OCI-LY7 (cell line): ENCODE measurements at regions of chr4 and their contacts with region 1.

Region 1: GRCh38 chr4:31442236-31442635 is 722.1 kb downstream of the PCDH7 start:
- DNase-seq: no peak
- H3K4me3 ChIP-seq: no peak overlapping the region
- H3K27ac ChIP-seq: no peak overlapping the region
- H3K4me1 ChIP-seq: no peaks in the 10 kb centered on the region
- CTCF ChIP-seq: 0 out of 2 replicates have a peak, but pooled peaks have one; percentile 26

Region 2: DNA sequence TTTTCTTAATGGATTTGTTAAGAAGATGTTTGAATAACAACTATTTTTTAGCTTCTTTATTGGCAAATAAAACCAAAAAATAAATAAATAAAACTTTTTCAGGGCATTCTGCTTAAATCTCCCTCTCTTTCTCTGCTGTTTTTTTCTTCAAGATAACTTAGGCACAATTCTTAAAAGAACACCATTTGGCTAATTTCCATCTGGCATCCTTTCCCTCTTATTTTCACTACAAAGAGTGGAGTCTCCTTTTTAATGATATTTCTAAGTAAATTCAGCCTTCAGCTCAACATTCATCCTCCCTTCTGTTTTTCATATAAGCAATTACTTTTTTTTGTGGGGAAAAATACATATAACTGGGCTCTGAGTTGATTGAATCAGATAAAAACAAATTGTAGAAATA is 634.0 kb before region 1 on chr4:
- CTCF ChIA-PET with region 1: no interaction called
- POLR2A ChIA-PET with region 1: no interaction called
- intact Hi-C with region 1: no loop called
- DNase-seq: no peak
- H3K4me3 ChIP-seq: no peak overlapping the region
- H3K27ac ChIP-seq: no peak overlapping the region
- H3K4me1 ChIP-seq: no peaks in the 10 kb centered on the region
- CTCF ChIP-seq: no peak

Region 3: GRCh38 chr4:31458813-31459212 is 16.6 kb after region 1 on chr4:
- CTCF ChIA-PET with region 1: no interaction called
- POLR2A ChIA-PET with region 1: interaction called, 15 read pairs
- intact Hi-C with region 1: no loop called
- DNase-seq: no peak
- H3K4me3 ChIP-seq: no peak overlapping the region
- H3K27ac ChIP-seq: no peak overlapping the region
- H3K4me1 ChIP-seq: no peaks in the 10 kb centered on the region
- CTCF ChIP-seq: no peak

Region 4: GRCh38 chr4:31575504-31575903 is 133.3 kb after region 1 on chr4:
- CTCF ChIA-PET with region 1: no interaction called
- POLR2A ChIA-PET with region 1: no interaction called
- intact Hi-C with region 1: no loop called
- DNase-seq: no peak
- H3K4me3 ChIP-seq: no peak overlapping the region
- H3K27ac ChIP-seq: no peak overlapping the region
- H3K4me1 ChIP-seq: no peaks in the 10 kb centered on the region
- CTCF ChIP-seq: no peak